ENCODE measurements at regions of chr5 and their contacts with region 1.

Region 1: GRCh38 chr5:115309751-115310370 is 13.4 kb upstream of the CCDC112 start:
- DNase-seq: peak in 2 of 9 experiments; percentile 60 to 64
- ATAC-seq: peak; percentile 52
- H3K4me3 ChIP-seq: no peak overlapping the region
- H3K4me3 Mint-ChIP-seq: no peak overlapping the region
- H3K27ac ChIP-seq: no peak overlapping the region
- H3K27ac Mint-ChIP-seq: no peak overlapping the region
- H3K4me1 ChIP-seq: no peaks in the 10 kb centered on the region
- H3K4me1 Mint-ChIP-seq: no peaks in the 10 kb centered on the region
- H3K27me3 ChIP-seq: peaks cover 0 to 2% of the 10 kb centered on the region in 2 experiments
- H3K27me3 Mint-ChIP-seq: peaks cover 26% of the 10 kb centered on the region
- CTCF ChIP-seq: peak; percentile 81

Region 2: DNA sequence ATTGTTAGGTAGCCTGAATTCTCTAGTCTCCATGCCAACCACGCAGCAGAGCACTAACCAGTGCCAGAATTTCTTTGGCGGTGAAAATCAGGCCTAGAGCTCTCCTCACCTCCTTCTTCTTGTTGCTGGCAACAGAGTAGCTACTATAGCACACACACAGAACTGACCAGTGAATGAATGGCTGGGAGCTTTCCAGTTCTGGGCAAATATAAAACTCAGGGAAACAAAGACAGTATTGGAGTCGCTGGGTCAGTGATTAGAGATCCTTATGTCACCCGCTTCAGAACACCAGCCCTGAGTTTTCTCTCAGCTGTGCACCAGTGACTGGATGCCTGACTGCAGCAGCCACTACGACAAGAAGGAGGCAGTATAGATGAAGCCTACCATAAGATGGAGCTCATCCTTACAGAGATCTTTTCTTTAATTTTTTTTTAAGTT is 261.6 kb after region 1 on chr5:
- CTCF ChIA-PET with region 1: interaction called, 188 read pairs
- POLR2A ChIA-PET with region 1: no interaction called
- intact Hi-C with region 1: loop called (anchors 1 kb)
- DNase-seq: no peak
- ATAC-seq: no peak
- H3K4me3 ChIP-seq: no peak overlapping the region
- H3K4me3 Mint-ChIP-seq: no peak overlapping the region
- H3K27ac ChIP-seq: no peak overlapping the region
- H3K27ac Mint-ChIP-seq: no peak overlapping the region
- H3K4me1 ChIP-seq: no peaks in the 10 kb centered on the region
- H3K4me1 Mint-ChIP-seq: peaks cover 3% of the 10 kb centered on the region
- H3K27me3 ChIP-seq: no peaks in the 10 kb centered on the region
- H3K27me3 Mint-ChIP-seq: peaks cover 4% of the 10 kb centered on the region
- CTCF ChIP-seq: no peak

Region 3: GRCh38 chr5:115579747-115580173 is 269.9 kb after region 1 on chr5:
- CTCF ChIA-PET with region 1: interaction called, 188 read pairs
- POLR2A ChIA-PET with region 1: no interaction called
- intact Hi-C with region 1: loop called (anchors 1 kb)
- DNase-seq: no peak
- ATAC-seq: no peak
- H3K4me3 ChIP-seq: no peak overlapping the region
- H3K4me3 Mint-ChIP-seq: no peak overlapping the region
- H3K27ac ChIP-seq: no peak overlapping the region
- H3K27ac Mint-ChIP-seq: no peak overlapping the region
- H3K4me1 ChIP-seq: no peaks in the 10 kb centered on the region
- H3K4me1 Mint-ChIP-seq: no peaks in the 10 kb centered on the region
- H3K27me3 ChIP-seq: no peaks in the 10 kb centered on the region
- H3K27me3 Mint-ChIP-seq: no peaks in the 10 kb centered on the region
- CTCF ChIP-seq: no peak

Region 4: DNA sequence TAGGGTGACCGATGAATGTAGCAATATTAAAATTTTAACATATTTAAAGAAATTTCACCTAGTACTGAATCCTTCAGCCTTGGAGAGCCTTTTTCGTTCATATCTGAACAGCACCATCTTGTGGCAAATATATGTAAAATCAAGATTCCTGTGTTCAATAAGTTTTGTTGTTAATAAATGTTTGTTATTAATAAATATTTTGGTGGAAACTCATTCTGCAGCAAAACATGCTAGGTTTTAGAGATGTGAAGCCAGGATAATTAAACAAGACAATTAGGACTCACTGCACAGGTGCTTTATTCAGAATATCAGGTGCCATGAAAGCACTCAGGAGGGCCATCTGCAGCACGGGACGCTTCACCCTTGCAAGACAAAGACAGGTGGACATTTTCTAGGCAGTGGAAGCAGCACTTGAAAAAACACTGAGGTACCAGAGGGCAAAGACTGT is 276.8 kb after region 1 on chr5:
- CTCF ChIA-PET with region 1: interaction called, 14 read pairs
- POLR2A ChIA-PET with region 1: no interaction called
- intact Hi-C with region 1: loop called (anchors 1 kb)
- DNase-seq: peak in 2 of 9 experiments; percentile 29 to 51
- ATAC-seq: peak; percentile 36
- H3K4me3 ChIP-seq: no peak overlapping the region
- H3K4me3 Mint-ChIP-seq: no peak overlapping the region
- H3K27ac ChIP-seq: no peak overlapping the region
- H3K27ac Mint-ChIP-seq: no peak overlapping the region
- H3K4me1 ChIP-seq: no peaks in the 10 kb centered on the region
- H3K4me1 Mint-ChIP-seq: no peaks in the 10 kb centered on the region
- H3K27me3 ChIP-seq: no peaks in the 10 kb centered on the region
- H3K27me3 Mint-ChIP-seq: no peaks in the 10 kb centered on the region
- CTCF ChIP-seq: peak; percentile 63

Region 5: DNA sequence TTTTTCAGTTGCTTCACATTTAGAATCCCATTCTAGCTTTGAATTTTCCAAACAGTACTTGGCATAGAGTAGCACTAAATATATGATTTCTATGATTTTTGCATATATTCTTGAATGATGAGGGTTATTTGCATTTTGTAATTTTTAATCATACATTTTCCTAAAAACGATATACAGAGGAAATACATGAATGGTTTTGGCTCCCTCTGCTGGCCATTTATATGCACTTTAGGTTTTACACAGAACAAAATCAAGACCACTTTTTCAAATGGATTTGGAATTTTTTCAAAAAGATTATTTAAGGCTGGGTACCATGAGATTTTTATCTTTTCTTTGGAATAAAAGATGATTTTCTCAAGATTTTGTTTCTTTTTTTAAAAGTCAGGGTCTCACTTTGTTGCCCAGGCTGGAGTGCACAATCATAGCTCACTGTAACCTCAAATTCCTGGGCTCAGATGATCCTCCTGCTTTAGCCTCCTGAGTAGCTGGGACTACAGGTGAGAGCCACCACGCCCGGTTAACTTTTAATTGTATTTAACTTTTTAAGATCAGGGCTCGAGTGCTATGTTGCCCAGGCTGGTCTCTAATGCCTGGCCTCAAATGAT is 758.3 kb after region 1 on chr5:
- CTCF ChIA-PET with region 1: no interaction called
- POLR2A ChIA-PET with region 1: no interaction called
- intact Hi-C with region 1: loop called (anchors 1 to 2 kb)
- DNase-seq: peak in 5 of 9 experiments; percentile 14 to 76 (median 30)
- ATAC-seq: no peak
- H3K4me3 ChIP-seq: no peak overlapping the region
- H3K4me3 Mint-ChIP-seq: no peak overlapping the region
- H3K27ac ChIP-seq: no peak overlapping the region
- H3K27ac Mint-ChIP-seq: no peak overlapping the region
- H3K4me1 ChIP-seq: no peaks in the 10 kb centered on the region
- H3K4me1 Mint-ChIP-seq: no peaks in the 10 kb centered on the region
- H3K27me3 ChIP-seq: peaks cover 0 to 4% of the 10 kb centered on the region in 2 experiments
- H3K27me3 Mint-ChIP-seq: peaks cover 24% of the 10 kb centered on the region
- CTCF ChIP-seq: peak; percentile 97

Measured in CD8-positive, alpha-beta T cell (primary cell).